ENCODE measurements at regions of chr22 and their contacts with region 1.

Region 1: GRCh38 chr22:40024201-40025061 is 29.7 kb downstream of the FAM83F start:
- DNase-seq: peak; percentile 78
- H3K4me3 Mint-ChIP-seq: no peak overlapping the region
- H3K27ac Mint-ChIP-seq: no peak overlapping the region
- H3K4me1 Mint-ChIP-seq: no peaks in the 10 kb centered on the region
- H3K27me3 Mint-ChIP-seq: no peaks in the 10 kb centered on the region

Region 2: DNA sequence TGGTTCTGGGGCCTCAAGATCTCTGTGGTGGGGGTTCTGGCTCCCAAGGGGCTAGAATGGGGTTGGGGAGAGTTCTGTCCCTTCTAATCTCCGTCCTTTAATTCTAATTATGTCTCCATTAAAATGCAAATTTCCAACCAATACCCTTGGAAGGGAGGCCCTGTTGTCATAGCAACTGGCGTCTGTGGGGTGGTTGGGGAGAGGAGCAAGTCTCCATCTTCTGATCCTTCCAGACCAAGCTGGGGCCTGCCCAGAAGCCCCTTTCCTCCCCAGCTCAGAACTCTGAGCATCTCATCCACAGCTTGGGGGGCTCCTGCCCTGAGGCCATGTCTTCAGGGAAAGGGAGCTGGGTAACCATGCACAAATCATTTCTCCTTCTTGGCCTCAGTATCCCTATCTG is 486.5 kb before region 1 on chr22:
- CTCF ChIA-PET with region 1: interaction called, 86 read pairs
- DNase-seq: no peak
- H3K4me3 Mint-ChIP-seq: no peak overlapping the region
- H3K27ac Mint-ChIP-seq: no peak overlapping the region
- H3K4me1 Mint-ChIP-seq: peaks cover 11% of the 10 kb centered on the region
- H3K27me3 Mint-ChIP-seq: peaks cover 25% of the 10 kb centered on the region

Region 3: GRCh38 chr22:39559454-39560105 is 464.9 kb before region 1 on chr22:
- CTCF ChIA-PET with region 1: interaction called, 31 read pairs
- DNase-seq: no peak
- H3K4me3 Mint-ChIP-seq: no peak overlapping the region
- H3K27ac Mint-ChIP-seq: no peak overlapping the region
- H3K4me1 Mint-ChIP-seq: peaks cover 5% of the 10 kb centered on the region
- H3K27me3 Mint-ChIP-seq: peaks cover 69% of the 10 kb centered on the region

Region 4: GRCh38 chr22:39622881-39623367 is 401.5 kb before region 1 on chr22:
- CTCF ChIA-PET with region 1: interaction called, 16 read pairs
- DNase-seq: peak; percentile 75
- H3K4me3 Mint-ChIP-seq: no peak overlapping the region
- H3K27ac Mint-ChIP-seq: no peak overlapping the region
- H3K4me1 Mint-ChIP-seq: peaks cover 11% of the 10 kb centered on the region
- H3K27me3 Mint-ChIP-seq: peaks cover 31% of the 10 kb centered on the region

Region 5: GRCh38 chr22:39825661-39826102 is 198.7 kb before region 1 on chr22:
- CTCF ChIA-PET with region 1: no interaction called
- DNase-seq: peak; percentile 25
- H3K4me3 Mint-ChIP-seq: no peak overlapping the region
- H3K27ac Mint-ChIP-seq: no peak overlapping the region
- H3K4me1 Mint-ChIP-seq: peaks cover 11% of the 10 kb centered on the region
- H3K27me3 Mint-ChIP-seq: no peaks in the 10 kb centered on the region

Region 6: DNA sequence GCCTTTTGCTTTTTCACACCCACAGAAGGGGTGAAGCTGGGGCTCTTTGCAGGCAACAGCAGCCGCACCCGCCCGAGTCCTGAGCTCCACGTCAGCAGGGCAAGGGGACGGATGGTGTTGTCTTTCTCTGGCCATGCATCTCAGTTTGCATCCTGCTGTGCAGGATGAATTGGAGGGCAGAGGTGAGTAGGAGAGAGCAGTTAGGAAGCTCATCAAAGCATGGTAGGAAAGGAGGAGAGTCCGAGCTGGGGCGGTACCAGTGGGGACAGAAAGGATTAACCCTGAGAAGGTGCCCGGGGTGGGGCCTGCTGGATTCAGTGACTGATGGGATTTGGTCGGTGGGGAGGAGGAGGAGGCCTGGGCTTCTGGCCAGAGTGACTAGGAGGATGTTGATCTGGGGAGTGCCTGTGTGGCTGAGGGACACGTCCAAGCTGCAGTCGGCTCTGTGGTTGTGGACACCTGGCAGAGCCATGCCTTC is 15.1 kb before region 1 on chr22:
- CTCF ChIA-PET with region 1: interaction called, 15 read pairs
- DNase-seq: no peak
- H3K4me3 Mint-ChIP-seq: peak overlapping the region; percentile 50
- H3K27ac Mint-ChIP-seq: peak overlapping the region; percentile 71
- H3K4me1 Mint-ChIP-seq: peaks cover 19% of the 10 kb centered on the region
- H3K27me3 Mint-ChIP-seq: peaks cover 70% of the 10 kb centered on the region

Region 7: GRCh38 chr22:40044102-40044869 is 19.9 kb after region 1 on chr22:
- CTCF ChIA-PET with region 1: interaction called, 11 read pairs
- DNase-seq: peak; percentile 99
- H3K4me3 Mint-ChIP-seq: peak overlapping the region; percentile 86
- H3K27ac Mint-ChIP-seq: peak overlapping the region; percentile 97
- H3K4me1 Mint-ChIP-seq: peaks cover 37% of the 10 kb centered on the region
- H3K27me3 Mint-ChIP-seq: peaks cover 22% of the 10 kb centered on the region

Measured in activated naive CD4-positive, alpha-beta T cell treated with anti-CD3 and anti-CD28 coated beads, Interleukin-2, amount 10 ng/mL, durations not matched to agents 7 days and 5 days (primary cell).